ENCODE measurements at regions of chr1 and their contacts with region 1.

Region 1: GRCh38 chr1:230772457-230773395 is 25.5 kb downstream of the CAPN9 start:
- DNase-seq: peak in 1 of 2 donors; percentile 33
- H3K4me3 ChIP-seq: peak overlapping the region in 1 of 2 donors; percentile 22
- H3K27ac ChIP-seq: peak overlapping the region in 1 of 2 donors; percentile 0
- H3K4me1 ChIP-seq: peaks cover 0 to 5% (median 1%) of the 10 kb centered on the region in 4 donors
- H3K27me3 ChIP-seq: no peaks in the 10 kb centered on the region
- CTCF ChIP-seq: peak; percentile 56 to 74

Region 2: DNA sequence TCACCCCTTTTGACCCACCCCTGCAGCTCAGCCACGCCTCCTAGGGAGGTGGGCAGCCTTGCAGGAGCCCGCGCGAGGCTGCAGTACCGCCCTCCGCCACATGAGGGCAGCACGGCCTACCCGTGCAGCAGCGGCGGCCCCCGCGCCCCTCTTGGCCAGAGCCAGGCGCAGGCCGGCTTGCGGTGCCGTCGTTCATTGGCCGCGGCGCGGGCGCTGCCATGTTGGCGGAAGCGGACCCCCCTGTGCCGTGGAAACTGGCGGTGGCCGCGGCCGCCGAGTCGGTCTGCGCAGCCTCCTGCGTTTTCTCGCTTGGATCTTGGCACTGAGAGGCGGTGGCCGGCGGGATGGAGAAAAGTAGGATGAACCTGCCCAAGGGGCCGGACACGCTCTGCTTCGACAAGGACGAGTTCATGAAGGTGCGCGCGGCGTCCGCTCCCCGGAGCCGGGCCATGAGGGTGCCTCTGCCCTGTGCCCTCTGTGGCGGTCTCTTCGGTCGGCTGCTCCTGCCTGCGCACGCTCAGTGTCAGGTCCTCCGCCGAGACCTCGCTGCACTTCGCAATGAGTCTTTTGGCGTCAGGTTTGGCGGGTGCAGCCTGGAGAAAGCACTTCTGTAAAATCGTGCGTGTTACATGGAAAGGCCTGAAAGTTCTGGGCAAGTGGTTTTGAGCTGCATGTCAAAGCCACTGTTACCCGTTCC is 130.3 kb before region 1 on chr1 and contains the start of gene COG2:
- intact Hi-C with region 1: loop called (anchors 5 kb)
- DNase-seq: peak; percentile 92 to 95
- H3K4me3 ChIP-seq: peak within 1 kb of the TSS; percentile 77 to 86
- H3K27ac ChIP-seq: peak within 1 kb of the TSS; percentile 79 to 81
- H3K4me1 ChIP-seq: peaks cover 0 to 33% (median 23%) of the 10 kb centered on the region in 4 donors
- H3K27me3 ChIP-seq: no peaks in the 10 kb centered on the region
- CTCF ChIP-seq: peak; percentile 99 to 100

Region 3: DNA sequence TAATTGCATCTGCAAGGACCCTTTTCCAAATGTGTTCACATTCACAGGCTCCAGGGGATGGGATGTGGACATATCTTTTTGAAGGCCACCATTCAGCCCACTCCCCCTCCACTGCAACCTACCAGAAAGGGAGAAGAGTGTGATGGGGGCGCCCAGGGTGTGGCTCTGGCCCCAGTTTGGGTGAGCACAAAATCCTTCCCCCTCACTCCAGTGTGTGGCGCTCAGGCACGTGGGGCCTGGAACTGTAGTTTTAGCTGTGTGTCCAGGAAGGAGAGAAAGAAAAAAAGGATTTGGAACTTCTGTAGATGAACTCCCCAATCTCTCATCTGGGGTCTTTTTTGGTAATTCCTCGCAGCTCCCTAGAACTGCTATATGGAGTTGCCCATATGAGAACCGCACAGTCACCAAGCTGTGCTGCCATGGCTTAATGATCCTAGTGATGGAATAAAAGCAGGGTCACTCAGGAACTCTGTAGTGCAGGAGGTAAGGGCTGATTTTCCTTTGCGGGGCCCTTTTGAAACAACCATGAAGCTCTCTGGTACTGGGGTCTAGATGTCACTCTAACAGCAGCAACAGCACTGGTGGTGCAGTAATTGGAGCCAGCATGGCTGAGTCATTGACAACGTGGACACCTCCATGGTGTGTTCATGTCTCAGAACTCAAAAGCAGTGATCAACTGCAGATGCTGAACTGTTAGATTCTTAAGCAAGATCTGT is 75.8 kb before region 1 on chr1:
- intact Hi-C with region 1: loop called (anchors 10 kb)
- DNase-seq: no peak
- H3K4me3 ChIP-seq: no peak overlapping the region
- H3K27ac ChIP-seq: no peak overlapping the region
- H3K4me1 ChIP-seq: no peaks in the 10 kb centered on the region
- H3K27me3 ChIP-seq: no peaks in the 10 kb centered on the region
- CTCF ChIP-seq: no peak

Region 4: GRCh38 chr1:230867903-230868735 is 95.4 kb after region 1 on chr1 and contains the start of gene C1orf198:
- intact Hi-C with region 1: no loop called
- DNase-seq: peak in 1 of 2 donors; percentile 88
- H3K4me3 ChIP-seq: peak within 1 kb of the TSS; percentile 83 to 86
- H3K27ac ChIP-seq: peak within 1 kb of the TSS; percentile 89 to 97
- H3K4me1 ChIP-seq: peaks cover 5 to 54% (median 39%) of the 10 kb centered on the region in 4 donors
- H3K27me3 ChIP-seq: no peaks in the 10 kb centered on the region
- CTCF ChIP-seq: no peak

Region 5: GRCh38 chr1:231162297-231162969 is 389.7 kb after region 1 on chr1:
- intact Hi-C with region 1: no loop called
- DNase-seq: no peak
- H3K4me3 ChIP-seq: peak overlapping the region; percentile 16 to 27
- H3K27ac ChIP-seq: no peak overlapping the region
- H3K4me1 ChIP-seq: peaks cover 0 to 33% (median 26%) of the 10 kb centered on the region in 4 donors
- H3K27me3 ChIP-seq: peaks cover 0 to 72% of the 10 kb centered on the region in 2 donors
- CTCF ChIP-seq: no peak

Measured in tibial artery (tissue), 4 donors.